ENCODE measurements at regions of chr7 and their contacts with region 1.

Region 1: DNA sequence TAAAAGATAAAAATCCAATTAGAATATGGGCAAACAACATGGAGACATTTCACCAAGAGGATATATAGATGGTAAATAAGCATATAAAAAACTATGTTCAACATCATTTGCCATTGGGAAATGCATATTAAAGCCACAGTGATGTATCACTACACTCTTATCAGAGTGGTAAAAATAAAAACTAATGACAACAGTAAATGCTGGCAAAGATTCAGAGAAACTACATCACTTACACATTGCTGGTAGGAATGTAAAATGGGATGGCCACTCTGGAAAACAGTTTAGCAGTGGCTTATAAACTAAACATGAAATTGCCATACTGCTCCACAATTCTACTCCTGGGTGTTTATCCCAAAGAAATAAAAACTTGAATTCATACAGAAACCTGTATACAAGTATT is 59.2 kb downstream of the CROT start:
- DNase-seq: no peak
- H3K4me3 ChIP-seq: no peak overlapping the region
- H3K27me3 ChIP-seq: no peaks in the 10 kb centered on the region
- CTCF ChIP-seq: no peak

Region 2: GRCh38 chr7:87416682-87417587 is 12.3 kb after region 1 on chr7:
- CTCF ChIA-PET with region 1: interaction called, 47 read pairs
- POLR2A ChIA-PET with region 1: no interaction called
- DNase-seq: no peak
- H3K4me3 ChIP-seq: no peak overlapping the region
- H3K27me3 ChIP-seq: no peaks in the 10 kb centered on the region
- CTCF ChIP-seq: peak; percentile 49